ENCODE measurements at regions of chr7 and their contacts with region 1.

Region 1: GRCh38 chr7:156949541-156950380 is at the start of gene NOM1:
- DNase-seq: peak; percentile 93 to 98
- ATAC-seq: peak; percentile 95
- H3K4me3 ChIP-seq: peak within 1 kb of the TSS; percentile 91 to 93
- H3K27ac ChIP-seq: no peak within 1 kb of the TSS
- H3K4me1 ChIP-seq: peaks cover 2 to 8% of the 10 kb centered on the region in 2 donors
- H3K27me3 ChIP-seq: no peaks in the 10 kb centered on the region
- total RNA-seq, gene NOM1: 19.4 to 23.5 TPM

Region 2: GRCh38 chr7:156735851-156736250 is 213.9 kb before region 1 on chr7:
- intact Hi-C with region 1: no loop called
- DNase-seq: no peak
- ATAC-seq: no peak
- H3K4me3 ChIP-seq: no peak overlapping the region
- H3K27ac ChIP-seq: no peak overlapping the region
- H3K4me1 ChIP-seq: no peaks in the 10 kb centered on the region
- H3K27me3 ChIP-seq: no peaks in the 10 kb centered on the region

Region 3: DNA sequence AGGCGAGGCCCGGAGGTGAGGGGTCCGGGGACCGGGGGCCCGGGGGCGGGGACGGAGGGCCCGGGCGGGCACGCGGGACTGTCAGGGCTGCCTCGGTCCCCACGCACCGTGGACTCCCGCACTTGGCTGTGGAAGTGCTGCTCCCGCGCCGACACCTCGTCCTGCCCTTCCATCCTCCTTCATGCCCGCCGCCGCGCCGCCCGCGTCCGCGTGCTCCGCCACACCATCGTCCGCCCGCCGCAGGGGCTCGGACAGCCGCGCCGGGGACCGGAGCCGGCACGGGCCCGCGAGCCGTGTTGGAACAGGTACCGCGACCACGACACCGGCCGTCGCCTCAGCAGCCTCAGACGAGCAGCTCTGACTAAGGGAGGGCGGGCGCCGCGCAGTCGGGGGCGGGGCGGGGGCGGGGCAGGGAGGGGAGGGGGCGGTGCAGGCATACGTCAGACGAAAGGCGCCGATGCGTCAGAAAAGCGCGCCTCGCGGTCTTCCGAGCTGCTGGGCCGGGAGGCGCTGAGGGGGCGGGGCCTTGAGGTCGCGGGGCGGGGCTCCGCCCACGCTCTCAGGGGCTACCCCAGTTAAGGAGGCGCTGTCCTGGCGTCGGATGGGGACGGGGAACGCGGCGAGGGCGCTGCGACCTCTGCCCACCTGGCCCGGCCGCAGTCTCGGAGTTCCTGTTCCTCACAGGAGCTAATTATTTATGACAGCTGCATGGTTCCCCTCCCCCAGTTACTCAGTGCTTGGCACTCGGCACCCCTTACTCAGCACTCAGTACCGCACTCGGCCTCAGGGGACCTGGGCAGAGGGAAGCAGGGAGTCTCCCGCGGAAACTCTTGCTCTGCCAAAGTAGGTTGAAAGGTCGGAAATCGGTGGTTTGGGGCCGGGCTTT is 56.7 kb before region 1 on chr7 and contains the start of gene LMBR1:
- intact Hi-C with region 1: loop called in 1 of 2 experiments (anchors 5 kb)
- DNase-seq: peak; percentile 94 to 97
- ATAC-seq: peak; percentile 98
- H3K4me3 ChIP-seq: peak within 1 kb of the TSS; percentile 72 to 96
- H3K27ac ChIP-seq: peak within 1 kb of the TSS in 1 of 2 donors; percentile 73
- H3K4me1 ChIP-seq: no peaks in the 10 kb centered on the region
- H3K27me3 ChIP-seq: no peaks in the 10 kb centered on the region
- total RNA-seq, gene LMBR1: 63.1 to 63.8 TPM

Measured in aorta (tissue), 5 donors.